Activated naive CD4-positive, alpha-beta T cell treated with anti-CD3 and anti-CD28 coated beads for 36 hours (primary cell): ENCODE measurements at regions of chr22 and their contacts with region 1.

Region 1: GRCh38 chr22:38051900-38052862 is 5.0 kb upstream of the PICK1 start:
- DNase-seq: peak; percentile 83
- H3K4me3 Mint-ChIP-seq: no peak overlapping the region
- H3K27ac Mint-ChIP-seq: no peak overlapping the region
- H3K4me1 Mint-ChIP-seq: peaks cover 7% of the 10 kb centered on the region
- H3K27me3 Mint-ChIP-seq: no peaks in the 10 kb centered on the region

Region 2: GRCh38 chr22:38114484-38115398 is 62.6 kb after region 1 on chr22:
- CTCF ChIA-PET with region 1: interaction called, 12 read pairs
- intact Hi-C with region 1: no loop called
- DNase-seq: peak; percentile 86
- H3K4me3 Mint-ChIP-seq: no peak overlapping the region
- H3K27ac Mint-ChIP-seq: no peak overlapping the region
- H3K4me1 Mint-ChIP-seq: no peaks in the 10 kb centered on the region
- H3K27me3 Mint-ChIP-seq: no peaks in the 10 kb centered on the region

Region 3: GRCh38 chr22:38137876-38138687 is 85.9 kb after region 1 on chr22:
- CTCF ChIA-PET with region 1: no interaction called
- intact Hi-C with region 1: no loop called
- DNase-seq: no peak
- H3K4me3 Mint-ChIP-seq: no peak overlapping the region
- H3K27ac Mint-ChIP-seq: no peak overlapping the region
- H3K4me1 Mint-ChIP-seq: no peaks in the 10 kb centered on the region
- H3K27me3 Mint-ChIP-seq: no peaks in the 10 kb centered on the region

Region 4: DNA sequence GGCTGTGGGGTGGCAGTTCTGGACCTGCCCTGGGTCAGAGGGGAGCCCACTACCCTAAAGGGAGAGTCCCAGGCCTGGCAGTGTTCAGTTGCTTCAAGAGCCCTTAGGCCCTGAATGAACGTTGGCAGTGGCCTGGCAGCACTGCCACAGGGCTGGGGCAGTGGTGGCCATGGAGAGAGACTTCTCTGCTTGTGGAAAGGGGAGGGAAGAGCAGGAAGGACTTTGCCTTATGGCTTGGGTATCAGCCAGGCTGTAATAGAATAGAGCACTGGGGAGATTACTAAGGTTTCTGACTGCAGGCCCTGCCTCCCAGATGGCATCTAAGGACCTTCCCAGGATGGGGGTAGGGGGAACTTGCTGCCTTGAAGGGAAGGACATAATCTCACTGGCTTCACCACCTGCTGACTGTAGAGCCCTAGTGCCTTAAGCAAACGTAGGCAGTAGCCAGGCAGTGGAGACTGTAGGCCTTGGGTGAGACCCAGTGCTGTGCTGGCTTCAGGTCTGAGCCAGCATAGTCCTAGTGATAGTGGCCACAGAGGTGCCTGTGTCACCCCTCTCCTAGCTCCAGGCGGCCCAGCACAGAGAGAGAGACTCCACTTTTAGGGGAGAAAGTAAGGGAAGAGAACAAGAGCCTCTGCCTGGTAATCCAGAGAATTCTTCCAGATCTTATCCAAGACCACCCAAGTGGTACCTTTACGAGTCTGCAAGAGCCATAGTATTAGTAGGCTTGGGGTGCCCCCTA is 101.8 kb after region 1 on chr22:
- CTCF ChIA-PET with region 1: no interaction called
- intact Hi-C with region 1: no loop called
- DNase-seq: no peak
- H3K4me3 Mint-ChIP-seq: no peak overlapping the region
- H3K27ac Mint-ChIP-seq: no peak overlapping the region
- H3K4me1 Mint-ChIP-seq: peaks cover 1% of the 10 kb centered on the region
- H3K27me3 Mint-ChIP-seq: no peaks in the 10 kb centered on the region